Psoas muscle (tissue), 8 donors: ENCODE measurements at regions of chr6 and their contacts with region 1.

Region 1: GRCh38 chr6:115137910-115138309 is 795.1 kb upstream of the HS3ST5 start:
- DNase-seq: no peak
- ATAC-seq: no peak
- H3K4me3 ChIP-seq: no peak overlapping the region
- H3K27ac ChIP-seq: no peak overlapping the region
- H3K4me1 ChIP-seq: no peaks in the 10 kb centered on the region
- H3K27me3 ChIP-seq: no peaks in the 10 kb centered on the region
- CTCF ChIP-seq: no peak

Region 2: DNA sequence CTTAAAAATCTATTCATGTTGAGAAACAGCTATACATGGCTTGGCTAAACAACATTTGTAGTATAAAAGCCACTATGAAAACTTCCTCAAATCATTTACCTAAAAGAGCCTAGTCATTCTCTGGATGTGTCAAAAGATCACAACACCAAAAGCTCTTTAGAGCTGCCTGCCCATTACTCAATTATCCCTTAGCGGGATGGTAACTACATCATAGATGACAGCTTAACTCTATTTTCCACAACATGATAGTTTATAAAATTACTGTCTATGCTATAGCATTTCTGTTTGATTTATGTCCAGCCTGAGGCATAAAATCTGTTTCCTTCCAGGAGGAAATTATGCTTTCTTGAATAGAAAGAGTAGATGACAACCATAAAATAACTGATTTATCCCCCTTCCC is 17.5 kb before region 1 on chr6:
- intact Hi-C with region 1: no loop called
- DNase-seq: no peak
- ATAC-seq: no peak
- H3K4me3 ChIP-seq: no peak overlapping the region
- H3K27ac ChIP-seq: no peak overlapping the region
- H3K4me1 ChIP-seq: no peaks in the 10 kb centered on the region
- H3K27me3 ChIP-seq: no peaks in the 10 kb centered on the region
- CTCF ChIP-seq: no peak

Region 3: GRCh38 chr6:115706330-115706729 is 568.4 kb after region 1 on chr6:
- intact Hi-C with region 1: loop called in 1 of 2 experiments (anchors 10 kb)
- DNase-seq: no peak
- ATAC-seq: no peak
- H3K4me3 ChIP-seq: no peak overlapping the region
- H3K27ac ChIP-seq: no peak overlapping the region
- H3K4me1 ChIP-seq: no peaks in the 10 kb centered on the region
- H3K27me3 ChIP-seq: no peaks in the 10 kb centered on the region
- CTCF ChIP-seq: no peak